Psoas muscle (tissue), 8 donors: ENCODE measurements at regions of chr3 and their contacts with region 1.

Region 1: DNA sequence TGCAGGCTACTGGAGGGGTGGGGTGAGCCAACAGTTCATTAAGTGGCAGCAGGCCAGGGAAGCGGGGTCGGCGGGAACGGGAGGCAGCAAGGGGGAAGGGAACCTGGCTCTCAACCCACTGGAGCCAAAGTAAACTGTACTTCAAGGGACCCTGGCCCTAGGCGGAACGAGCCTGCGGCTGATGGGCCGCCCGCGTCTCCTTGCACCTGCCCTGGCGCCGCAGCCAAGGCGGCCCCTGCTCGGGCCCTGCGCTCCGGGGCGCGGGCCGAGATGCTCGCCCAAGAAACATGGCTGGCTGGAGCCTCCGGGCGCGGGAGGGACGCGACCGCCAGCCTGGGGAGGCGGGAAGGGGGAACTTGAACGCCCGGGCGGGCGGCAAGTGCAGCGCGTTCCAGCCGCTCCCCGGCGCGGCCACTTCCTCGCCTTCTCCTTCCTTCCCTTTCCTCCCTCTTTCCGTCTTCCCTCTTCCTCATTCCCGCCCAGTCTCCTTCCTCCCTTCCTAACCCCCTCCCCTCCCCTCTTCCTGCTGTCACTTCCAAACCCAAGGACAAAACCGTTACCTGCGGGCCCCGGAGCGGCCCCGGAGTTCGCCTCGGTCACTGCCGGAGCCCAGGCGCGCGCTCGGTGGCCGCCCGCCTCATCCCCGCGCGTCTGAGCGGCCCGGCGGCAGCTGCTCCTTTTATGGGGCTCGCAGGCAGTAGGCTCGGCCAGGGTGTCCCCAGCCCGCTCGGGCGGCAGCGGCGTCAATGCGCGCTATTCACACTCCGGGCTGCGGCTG is 489.7 kb downstream of the MAGI1 start:
- DNase-seq: peak; percentile 17 to 71
- ATAC-seq: peak; percentile 72 to 97 (median 88)
- H3K4me3 ChIP-seq: peak overlapping the region; percentile 85
- H3K27ac ChIP-seq: no peak overlapping the region
- H3K4me1 ChIP-seq: no peaks in the 10 kb centered on the region
- H3K27me3 ChIP-seq: no peaks in the 10 kb centered on the region
- CTCF ChIP-seq: no peak

Region 2: GRCh38 chr3:65265942-65266590 is 283.0 kb before region 1 on chr3:
- intact Hi-C with region 1: no loop called
- DNase-seq: no peak
- ATAC-seq: no peak
- H3K4me3 ChIP-seq: no peak overlapping the region
- H3K27ac ChIP-seq: no peak overlapping the region
- H3K4me1 ChIP-seq: no peaks in the 10 kb centered on the region
- H3K27me3 ChIP-seq: no peaks in the 10 kb centered on the region
- CTCF ChIP-seq: no peak

Region 3: GRCh38 chr3:65483480-65483879 is 65.6 kb before region 1 on chr3:
- intact Hi-C with region 1: loop called in 1 of 2 experiments (anchors 10 kb)
- DNase-seq: peak; percentile 14 to 68
- ATAC-seq: peak; percentile 67 to 92 (median 84)
- H3K4me3 ChIP-seq: peak overlapping the region; percentile 6
- H3K27ac ChIP-seq: peak overlapping the region; percentile 25
- H3K4me1 ChIP-seq: peaks cover 55% of the 10 kb centered on the region
- H3K27me3 ChIP-seq: no peaks in the 10 kb centered on the region
- CTCF ChIP-seq: no peak